Activated T-helper 2 cell treated with anti-CD3 and anti-CD28 coated beads, Interferon-gamma antibody, Interleukin-2, Interleukin-4, amounts not matched to agents 10 μg/mL and 5 μg/mL and 100 μg/mL, durations not matched to agents 14 hours and 24 hours and 36 hours (primary cell): ENCODE measurements at regions of chr10 and their contacts with region 1.

Region 1: GRCh38 chr10:23314835-23315239 is 29.8 kb downstream of the C10orf67 start:
- DNase-seq: no peak
- H3K4me3 Mint-ChIP-seq: no peak overlapping the region
- H3K27ac Mint-ChIP-seq: no peak overlapping the region
- H3K4me1 Mint-ChIP-seq: peaks cover 2% of the 10 kb centered on the region
- H3K27me3 Mint-ChIP-seq: peaks cover 5% of the 10 kb centered on the region

Region 2: DNA sequence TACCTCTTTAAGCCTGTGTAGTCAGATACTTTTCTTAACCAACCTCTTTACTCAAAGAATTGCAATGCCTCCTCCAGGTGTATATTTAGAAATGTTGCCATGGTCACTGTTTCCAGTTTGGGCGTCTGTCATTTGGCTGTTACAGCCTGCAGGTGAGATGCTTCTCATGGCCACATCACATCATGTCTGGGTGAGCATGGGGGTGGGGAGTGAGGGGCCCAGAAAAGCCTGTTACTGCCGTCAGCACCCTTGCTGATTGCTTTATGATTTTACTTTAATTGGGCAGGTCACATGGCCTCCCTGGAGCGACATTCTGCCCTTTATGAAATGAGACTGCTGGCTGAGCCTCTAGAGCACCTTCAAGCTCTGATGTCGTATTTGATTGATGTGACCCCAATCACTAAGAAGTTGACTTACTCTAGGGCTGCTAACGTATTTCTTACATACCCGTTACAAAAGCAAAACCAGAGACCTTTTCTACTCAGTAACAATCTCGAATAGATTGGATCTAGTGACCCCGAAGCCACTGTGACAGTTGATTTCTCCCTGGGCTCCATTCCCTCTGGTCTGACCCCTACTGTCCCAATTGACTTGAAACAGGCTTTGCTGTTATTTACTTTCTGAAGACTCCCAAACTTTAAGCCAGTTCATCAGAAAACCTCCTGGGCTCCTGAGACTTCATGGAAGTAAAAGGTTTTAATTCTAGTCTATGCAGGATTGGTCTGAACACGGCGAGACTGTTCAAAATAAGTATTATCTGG is 184.7 kb after region 1 on chr10:
- intact Hi-C with region 1: no loop called
- DNase-seq: no peak
- H3K4me3 Mint-ChIP-seq: no peak overlapping the region
- H3K27ac Mint-ChIP-seq: no peak overlapping the region
- H3K4me1 Mint-ChIP-seq: no peaks in the 10 kb centered on the region
- H3K27me3 Mint-ChIP-seq: peaks cover 9% of the 10 kb centered on the region

Region 3: DNA sequence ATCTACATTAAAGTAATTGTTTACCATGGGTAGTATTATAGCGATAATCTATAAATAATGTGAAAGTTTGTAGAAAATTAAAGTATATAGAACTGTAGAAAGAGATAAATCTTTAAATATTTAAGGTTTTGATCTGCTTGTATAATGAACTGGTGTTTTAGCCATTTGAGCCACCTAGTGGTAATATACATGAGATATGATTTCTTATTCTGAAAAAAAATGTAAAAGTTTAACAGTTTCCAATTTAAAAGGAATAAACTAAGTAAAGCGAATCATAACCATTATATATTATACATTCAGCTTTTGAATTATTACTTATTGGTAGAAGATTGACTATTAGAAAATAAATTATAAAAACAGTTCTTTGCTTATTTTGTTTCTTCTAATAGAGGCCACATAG is 215.2 kb after region 1 on chr10:
- intact Hi-C with region 1: loop called (anchors 2 kb)
- DNase-seq: no peak
- H3K4me3 Mint-ChIP-seq: no peak overlapping the region
- H3K27ac Mint-ChIP-seq: no peak overlapping the region
- H3K4me1 Mint-ChIP-seq: peaks cover 16% of the 10 kb centered on the region
- H3K27me3 Mint-ChIP-seq: no peaks in the 10 kb centered on the region

Region 4: DNA sequence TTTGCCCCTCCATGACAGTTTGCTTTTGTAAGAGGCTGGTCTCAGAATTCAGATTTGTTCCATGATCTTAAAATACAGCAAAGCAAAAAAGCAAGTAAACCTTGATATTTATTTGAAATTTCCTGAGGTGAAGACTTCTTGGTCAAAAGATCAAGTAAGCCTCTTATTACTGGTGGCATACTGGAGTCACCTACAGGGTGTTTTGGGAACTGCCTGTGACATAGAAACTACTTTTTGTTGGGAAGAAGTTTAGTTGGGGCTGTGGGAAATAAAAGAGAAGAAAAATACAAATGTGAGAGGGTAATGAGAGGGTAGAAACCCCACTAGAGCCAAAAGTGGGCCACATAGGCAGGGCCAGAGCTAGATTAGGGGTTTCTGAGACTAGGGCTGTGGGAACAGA is 341.9 kb after region 1 on chr10:
- intact Hi-C with region 1: loop called (anchors 1 kb)
- DNase-seq: no peak
- H3K4me3 Mint-ChIP-seq: no peak overlapping the region
- H3K27ac Mint-ChIP-seq: no peak overlapping the region
- H3K4me1 Mint-ChIP-seq: no peaks in the 10 kb centered on the region
- H3K27me3 Mint-ChIP-seq: no peaks in the 10 kb centered on the region

Region 5: GRCh38 chr10:24197263-24197662 is 882.4 kb after region 1 on chr10:
- intact Hi-C with region 1: loop called (anchors 2 kb)
- DNase-seq: no peak
- H3K4me3 Mint-ChIP-seq: no peak overlapping the region
- H3K27ac Mint-ChIP-seq: no peak overlapping the region
- H3K4me1 Mint-ChIP-seq: no peaks in the 10 kb centered on the region
- H3K27me3 Mint-ChIP-seq: peaks cover 1% of the 10 kb centered on the region